Right ventricle myocardium inferior (tissue), 1 donor: ENCODE measurements at regions of chrX and their contacts with region 1.

Region 1: GRCh38 chrX:147476008-147476407 is 435.7 kb upstream of the FMR1 start:
- DNase-seq: no peak
- ATAC-seq: no peak

Region 2: DNA sequence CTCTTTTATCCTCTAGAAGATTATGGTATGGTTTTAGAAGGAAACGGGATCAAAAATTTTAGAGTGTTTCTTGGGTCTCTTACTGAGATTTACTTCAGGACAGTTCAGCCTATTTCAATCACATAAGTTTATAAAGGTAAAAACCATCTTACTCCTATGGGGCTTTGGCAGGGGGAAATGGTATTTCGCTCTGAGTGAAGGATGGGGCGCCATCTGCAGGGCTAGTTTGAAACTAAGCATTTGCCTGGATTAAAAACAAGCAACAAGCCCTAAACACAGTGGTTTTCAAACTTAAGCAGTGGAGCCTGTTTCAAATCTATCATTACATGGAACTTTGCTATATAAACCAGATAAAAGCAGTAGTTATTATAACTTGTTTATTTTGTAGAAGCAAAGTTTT is 74.2 kb after region 1 on chrX:
- intact Hi-C with region 1: loop called (anchors 5 kb)
- DNase-seq: no peak
- ATAC-seq: no peak

Region 3: DNA sequence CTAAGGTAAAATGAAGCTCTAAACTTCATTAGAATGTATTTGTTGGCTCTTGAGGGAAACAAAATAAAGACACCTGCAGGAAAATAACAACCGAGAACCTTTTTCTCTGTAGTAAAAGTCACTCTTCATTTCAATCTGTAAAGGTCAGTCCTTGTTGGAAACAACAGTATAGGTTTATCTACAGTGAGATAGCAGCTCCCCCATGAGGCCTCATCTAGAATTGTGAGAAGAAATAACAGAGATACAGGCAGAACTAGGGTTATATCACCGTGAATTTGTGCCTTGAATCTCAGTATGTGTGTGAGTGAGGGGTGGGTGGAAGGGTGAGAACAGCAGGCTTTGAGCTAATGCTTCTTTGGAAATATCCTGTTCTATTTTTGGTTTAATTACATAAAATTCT is 327.9 kb after region 1 on chrX:
- intact Hi-C with region 1: loop called (anchors 10 kb)
- DNase-seq: no peak
- ATAC-seq: no peak

Region 4: GRCh38 chrX:148035380-148035779 is 559.4 kb after region 1 on chrX:
- intact Hi-C with region 1: loop called (anchors 10 kb)
- DNase-seq: no peak
- ATAC-seq: peak; percentile 73

Region 5: GRCh38 chrX:148672517-148672916 is 1196.5 kb after region 1 on chrX:
- intact Hi-C with region 1: no loop called
- DNase-seq: no peak
- ATAC-seq: no peak